GM12878 (cell line): ENCODE measurements at regions of chrX and their contacts with region 1.

Region 1: DNA sequence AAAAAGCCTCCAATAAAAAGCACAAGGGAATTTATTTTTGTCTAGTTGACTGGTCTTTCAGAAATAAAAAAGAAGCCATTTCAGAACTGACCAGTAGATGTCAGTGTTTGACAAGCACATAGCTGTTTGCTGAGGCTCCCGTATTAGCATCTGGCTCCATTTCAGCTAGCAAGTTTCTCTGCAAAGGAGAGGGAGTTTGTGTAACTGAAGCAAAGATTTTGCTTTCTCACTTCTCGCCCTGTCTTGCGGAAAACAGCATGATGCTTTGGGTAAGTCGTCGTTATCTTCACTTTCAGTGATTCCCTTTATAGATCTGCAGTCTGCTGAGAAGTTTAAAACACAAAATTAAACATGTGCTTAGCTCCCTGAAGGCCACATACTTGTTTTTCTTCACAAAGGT is 85.5 kb downstream of the CT47B1 start:
- DNase-seq: peak; percentile 47
- ATAC-seq: peak; percentile 86
- H3K4me3 ChIP-seq: no peak overlapping the region
- H3K27ac ChIP-seq: no peak overlapping the region
- H3K4me1 ChIP-seq: no peaks in the 10 kb centered on the region
- H3K27me3 ChIP-seq: no peaks in the 10 kb centered on the region
- CTCF ChIP-seq: peak; percentile 71 to 85 (median 79)
- EP300 ChIP-seq: no peak
- POLR2A ChIP-seq: no peak
- RAD21 ChIP-seq: peak; percentile 96

Region 2: DNA sequence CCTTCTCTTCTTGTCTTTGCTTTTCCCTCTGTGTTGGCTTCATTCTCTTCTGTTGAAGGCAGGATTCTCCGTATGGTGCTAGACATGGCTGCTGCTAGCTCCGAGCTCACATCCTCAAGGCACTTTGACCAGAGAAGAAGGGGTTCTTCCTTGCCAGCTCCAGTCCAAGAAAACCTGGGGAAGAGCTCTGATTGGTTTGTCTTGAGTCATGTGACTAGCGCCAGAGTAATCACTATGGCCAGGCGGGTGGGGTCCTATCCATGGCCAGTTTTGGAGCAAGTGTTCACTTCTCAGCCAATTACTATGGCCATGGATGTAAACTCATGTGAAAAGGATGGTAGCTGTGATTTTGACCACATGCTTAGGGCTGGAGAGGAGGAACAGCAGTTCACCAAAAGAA is 11.3 kb after region 1 on chrX:
- CTCF ChIA-PET with region 1: interaction called, 31 read pairs
- POLR2A ChIA-PET with region 1: no interaction called
- RAD21 ChIA-PET with region 1: interaction called, 9 read pairs
- SMC1A ChIA-PET with region 1: interaction called, 9 read pairs
- in situ Hi-C with region 1: no loop called
- intact Hi-C with region 1: no loop called
- DNase-seq: no peak
- ATAC-seq: no peak
- H3K4me3 ChIP-seq: no peak overlapping the region
- H3K27ac ChIP-seq: no peak overlapping the region
- H3K4me1 ChIP-seq: no peaks in the 10 kb centered on the region
- H3K27me3 ChIP-seq: no peaks in the 10 kb centered on the region
- CTCF ChIP-seq: no peak
- EP300 ChIP-seq: no peak
- POLR2A ChIP-seq: no peak
- RAD21 ChIP-seq: no peak

Region 3: DNA sequence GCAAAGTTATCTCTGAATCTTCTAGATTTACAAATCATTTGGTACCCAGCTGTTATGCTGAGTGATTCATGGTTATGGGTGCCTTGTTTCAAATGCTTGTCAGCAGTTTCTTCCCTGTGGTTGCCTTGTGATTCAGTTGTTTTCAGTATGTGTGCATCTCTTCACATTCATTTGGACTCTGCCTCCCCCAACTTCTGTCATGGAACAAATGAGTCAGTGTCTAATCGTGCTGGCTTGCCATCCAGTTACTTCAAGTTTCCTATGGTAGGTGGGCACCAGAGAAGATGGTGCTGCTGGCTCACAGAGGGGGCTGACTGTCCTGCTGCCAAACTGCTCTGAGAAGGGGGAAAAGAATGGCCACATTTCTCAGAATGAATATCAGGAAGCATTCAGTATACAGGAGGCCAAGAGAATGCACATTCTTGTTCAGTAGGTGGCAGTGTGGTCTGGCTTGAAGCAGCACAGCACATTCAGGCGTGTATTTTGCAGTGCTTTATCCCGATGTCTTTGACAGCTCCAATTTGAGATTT is 518.2 kb after region 1 on chrX:
- CTCF ChIA-PET with region 1: interaction called, 6 read pairs
- POLR2A ChIA-PET with region 1: no interaction called
- RAD21 ChIA-PET with region 1: interaction called, 7 read pairs
- SMC1A ChIA-PET with region 1: interaction called, 10 read pairs
- in situ Hi-C with region 1: no loop called
- intact Hi-C with region 1: loop called (anchors 2 kb)
- DNase-seq: peak; percentile 68
- ATAC-seq: peak; percentile 86
- H3K4me3 ChIP-seq: no peak overlapping the region
- H3K27ac ChIP-seq: no peak overlapping the region
- H3K4me1 ChIP-seq: peaks cover 15% of the 10 kb centered on the region
- H3K27me3 ChIP-seq: no peaks in the 10 kb centered on the region
- CTCF ChIP-seq: peak; percentile 44 to 63 (median 49); a peak in 4 of 6 replicates
- EP300 ChIP-seq: peak in 1 of 2 experiments; percentile 75; a peak in 1 of 4 replicates
- POLR2A ChIP-seq: no peak
- RAD21 ChIP-seq: peak; percentile 59

Region 4: DNA sequence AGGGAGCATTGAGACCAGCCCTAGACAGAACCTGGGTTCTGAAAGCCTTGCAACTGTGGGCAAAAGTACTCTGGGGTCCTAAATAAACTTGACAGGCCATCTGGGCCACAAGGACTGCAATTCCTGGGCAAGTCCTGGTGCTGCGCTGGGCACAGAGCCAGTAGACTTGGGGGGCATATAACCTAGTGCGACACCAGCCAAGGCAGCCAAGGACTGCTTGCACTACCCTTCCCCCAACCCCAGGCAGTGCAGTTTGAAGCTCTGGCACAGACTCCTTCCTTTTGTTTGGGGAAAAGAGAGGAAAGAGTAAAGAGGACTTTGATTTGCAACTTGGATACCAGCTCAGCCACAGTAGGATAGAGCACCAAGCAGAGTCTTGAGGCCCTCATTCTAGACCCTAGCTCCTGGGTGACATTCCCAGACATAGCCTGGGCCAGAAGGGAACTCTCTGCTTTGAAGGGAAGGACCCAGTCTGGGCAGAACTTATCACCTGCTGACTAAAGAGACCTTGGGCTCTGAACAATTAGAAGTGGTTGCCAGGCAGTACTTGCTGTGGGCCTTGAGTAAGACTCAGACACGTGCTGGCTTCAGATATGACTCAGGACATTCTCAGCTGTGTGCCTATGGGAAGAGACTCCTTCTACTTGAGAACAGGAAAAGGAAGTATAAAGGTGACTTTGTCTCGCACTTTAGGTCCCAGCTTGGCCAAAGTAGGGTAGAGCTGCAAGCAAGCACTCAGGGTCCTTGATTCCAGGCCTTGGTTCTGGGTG is 780.1 kb after region 1 on chrX:
- CTCF ChIA-PET with region 1: interaction called, 9 read pairs
- POLR2A ChIA-PET with region 1: no interaction called
- RAD21 ChIA-PET with region 1: interaction called, 4 read pairs
- SMC1A ChIA-PET with region 1: interaction called, 19 read pairs
- in situ Hi-C with region 1: loop called (anchors 5 kb)
- intact Hi-C with region 1: no loop called
- DNase-seq: no peak
- ATAC-seq: peak; percentile 77
- H3K4me3 ChIP-seq: no peak overlapping the region
- H3K27ac ChIP-seq: no peak overlapping the region
- H3K4me1 ChIP-seq: peaks cover 4% of the 10 kb centered on the region; the same call in 1 of the 2 replicates
- H3K27me3 ChIP-seq: no peaks in the 10 kb centered on the region
- CTCF ChIP-seq: no peak
- EP300 ChIP-seq: no peak
- POLR2A ChIP-seq: no peak
- RAD21 ChIP-seq: no peak